Right ventricle myocardium superior (tissue), 1 donor: ENCODE measurements at regions of chr1 and their contacts with region 1.

Region 1: DNA sequence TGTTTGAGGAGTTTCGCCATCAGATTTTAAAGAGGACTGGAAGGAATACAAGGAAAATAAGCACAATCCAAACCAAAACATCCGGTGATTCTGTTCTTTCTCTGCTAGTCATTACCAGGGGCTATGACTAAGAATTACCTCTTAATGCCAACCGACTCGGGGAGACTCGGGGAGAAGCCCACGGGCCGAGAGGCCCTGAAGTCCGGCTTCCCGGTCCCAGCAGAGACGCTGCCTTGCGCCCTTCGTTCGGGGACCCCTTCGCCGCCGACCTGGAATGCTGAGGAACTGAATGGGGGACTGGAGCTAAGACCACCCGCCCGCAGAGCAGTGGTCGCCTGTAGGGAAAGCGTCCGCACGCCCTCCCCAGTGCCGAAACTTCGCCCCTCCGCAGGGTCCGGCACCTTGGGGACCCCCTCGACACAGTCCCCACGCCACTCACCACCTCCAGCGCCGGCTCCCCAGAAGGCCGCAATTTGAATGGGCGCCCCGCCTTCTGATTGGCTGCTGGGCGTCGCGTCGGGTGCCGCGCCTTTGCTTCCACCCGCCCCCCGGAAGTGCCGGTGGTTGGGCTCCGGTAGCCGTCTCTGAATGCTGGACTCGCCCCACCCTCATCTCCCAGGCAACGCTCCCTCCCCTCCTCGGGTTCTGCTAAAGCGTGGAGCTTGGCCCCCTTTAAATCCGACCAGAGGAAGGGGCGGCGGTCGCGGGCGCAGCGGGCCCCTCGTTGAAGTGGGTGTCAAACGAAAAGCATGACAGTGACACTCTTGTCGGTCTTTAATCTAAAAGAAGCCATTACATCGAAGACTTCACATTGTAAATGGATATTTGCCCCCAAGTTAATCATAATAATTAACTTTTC is at the start of gene KIF14:
- DNase-seq: peak; percentile 95
- ATAC-seq: peak; percentile 99
- total RNA-seq, gene KIF14: 0.19 TPM

Region 2: DNA sequence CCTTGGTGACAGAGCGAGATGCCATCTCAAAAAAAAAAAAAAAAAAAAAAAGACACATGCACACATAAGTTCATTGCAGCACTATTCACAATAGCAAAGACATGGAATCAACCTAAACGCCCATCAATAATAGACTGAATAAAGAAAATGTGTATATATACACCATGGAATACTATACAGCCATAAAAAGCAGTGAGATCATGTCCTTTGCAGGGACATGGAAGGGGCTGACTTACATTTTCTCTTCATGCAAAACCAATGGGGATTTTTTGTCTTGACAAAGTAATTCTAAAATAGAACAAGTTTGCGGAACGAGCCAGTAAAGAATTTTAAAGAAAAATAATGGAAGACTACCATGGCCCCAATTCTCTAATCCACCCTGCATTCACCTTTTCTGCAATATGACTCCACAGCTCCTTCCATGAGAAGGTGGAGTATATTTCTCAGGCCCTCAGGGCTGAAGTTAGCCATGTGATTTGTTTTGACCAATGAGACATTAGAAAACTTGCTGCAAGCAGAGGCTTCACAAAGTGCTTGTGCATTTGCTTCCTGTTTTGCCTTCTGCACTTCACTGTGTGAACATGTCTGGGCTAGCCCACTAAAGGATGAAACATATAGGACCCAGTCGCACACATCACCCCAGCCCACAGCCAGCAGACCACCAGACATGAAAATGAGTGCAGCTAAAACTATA is 671.8 kb before region 1 on chr1:
- intact Hi-C with region 1: no loop called
- DNase-seq: no peak
- ATAC-seq: no peak

Region 3: GRCh38 chr1:200802865-200803512 is 182.5 kb after region 1 on chr1:
- intact Hi-C with region 1: loop called (anchors 5 kb)
- DNase-seq: peak; percentile 73
- ATAC-seq: peak; percentile 91

Region 4: DNA sequence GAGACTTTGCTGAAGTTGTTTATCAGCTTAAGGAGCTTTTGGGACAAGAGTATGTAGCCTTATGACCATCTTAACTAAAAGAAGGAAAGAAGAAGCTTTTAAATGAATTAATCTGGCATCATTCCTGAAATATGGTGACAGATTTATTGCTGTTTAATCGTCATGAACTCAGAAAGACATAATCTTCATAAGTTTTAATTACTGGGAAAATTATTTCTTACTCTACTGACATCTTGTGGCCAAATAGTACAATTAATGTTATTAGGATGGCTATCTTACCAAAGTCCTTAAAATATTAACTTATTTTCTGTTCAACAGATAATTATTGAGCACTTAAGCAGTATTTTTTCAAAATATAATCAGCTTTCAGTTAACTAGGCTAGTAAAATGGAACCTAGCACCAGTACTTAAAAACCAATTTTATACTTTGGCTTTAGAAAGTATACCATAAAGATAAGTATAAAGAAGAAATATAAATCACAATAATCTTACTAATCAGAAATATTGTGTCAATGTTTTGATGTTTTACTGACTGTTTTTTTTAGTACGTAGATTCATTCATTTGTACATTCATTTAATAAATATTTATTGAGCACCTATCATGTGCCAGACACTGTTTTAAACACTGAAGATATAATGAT is 217.5 kb after region 1 on chr1:
- intact Hi-C with region 1: loop called (anchors 10 kb)
- DNase-seq: no peak
- ATAC-seq: no peak